Prostate gland (tissue), 2 donors: ENCODE measurements at regions of chr16 and their contacts with region 1.

Region 1: GRCh38 chr16:4048481-4048880 is 67.8 kb downstream of the ADCY9 start:
- DNase-seq: no peak
- H3K4me3 ChIP-seq: no peak overlapping the region
- H3K27ac ChIP-seq: no peak overlapping the region
- H3K4me1 ChIP-seq: no peaks in the 10 kb centered on the region
- H3K27me3 ChIP-seq: no peaks in the 10 kb centered on the region
- CTCF ChIP-seq: no peak
- POLR2A ChIP-seq: no peak

Region 2: GRCh38 chr16:4116337-4117249 is 68.1 kb after region 1 on chr16 and contains the start of gene ADCY9:
- intact Hi-C with region 1: loop called (anchors 10 kb)
- DNase-seq: peak; percentile 75
- H3K4me3 ChIP-seq: peak within 1 kb of the TSS; percentile 44 to 49
- H3K27ac ChIP-seq: peak within 1 kb of the TSS; percentile 47 to 60
- H3K4me1 ChIP-seq: no peaks in the 10 kb centered on the region
- H3K27me3 ChIP-seq: no peaks in the 10 kb centered on the region
- CTCF ChIP-seq: peak in 1 of 4 experiments; percentile 8
- POLR2A ChIP-seq: peak; percentile 32
- total RNA-seq, gene ADCY9: 7.2 to 58.3 TPM

Region 3: GRCh38 chr16:4461250-4462085 is 413.0 kb after region 1 on chr16:
- intact Hi-C with region 1: no loop called
- DNase-seq: no peak
- H3K4me3 ChIP-seq: no peak overlapping the region
- H3K27ac ChIP-seq: no peak overlapping the region
- H3K4me1 ChIP-seq: no peaks in the 10 kb centered on the region
- H3K27me3 ChIP-seq: no peaks in the 10 kb centered on the region
- CTCF ChIP-seq: no peak
- POLR2A ChIP-seq: no peak